Astrocyte of the cerebellum (primary cell): ENCODE measurements at regions of chr16 and their contacts with region 1.

Region 1: GRCh38 chr16:49652456-49653172 is 203.3 kb downstream of the ZNF423 start:
- DNase-seq: no peak
- H3K4me3 ChIP-seq: no peak overlapping the region
- CTCF ChIP-seq: no peak

Region 2: DNA sequence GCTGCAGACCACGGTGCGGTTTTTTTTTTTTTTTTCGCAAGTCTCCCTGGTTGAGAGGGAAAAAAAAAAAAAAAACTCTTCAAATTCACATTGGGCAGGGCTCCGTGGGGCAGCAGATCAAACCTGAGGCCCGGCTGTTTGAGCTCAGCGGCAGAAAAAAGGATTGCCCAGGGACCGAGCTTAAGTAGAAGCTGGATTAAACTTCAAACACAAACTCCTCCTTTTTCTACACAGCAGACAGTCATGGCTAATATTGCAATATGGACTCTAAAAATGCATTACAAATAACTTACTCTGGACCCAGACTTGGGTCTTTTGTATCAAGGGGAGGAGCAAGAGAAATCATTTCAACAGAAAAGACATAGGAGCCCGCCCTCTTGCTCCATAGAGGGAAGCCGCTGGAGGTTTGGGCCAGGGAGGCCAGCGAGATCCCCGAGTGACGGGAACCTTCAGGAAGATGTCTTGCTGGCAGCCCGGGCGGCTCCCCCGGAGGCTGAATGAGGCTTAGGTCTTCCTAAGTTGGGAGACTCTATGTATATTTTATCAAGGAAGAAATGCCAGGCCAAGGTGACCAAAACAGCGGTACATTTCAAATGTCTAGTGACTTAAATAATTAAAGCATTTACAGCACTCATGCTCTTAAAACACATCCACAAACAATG is 35.6 kb after region 1 on chr16:
- in situ Hi-C with region 1: loop called (anchors 5 kb)
- DNase-seq: no peak
- H3K4me3 ChIP-seq: no peak overlapping the region
- CTCF ChIP-seq: no peak

Region 3: GRCh38 chr16:49733313-49734009 is 80.8 kb after region 1 on chr16:
- in situ Hi-C with region 1: no loop called
- DNase-seq: no peak
- H3K4me3 ChIP-seq: no peak overlapping the region
- CTCF ChIP-seq: no peak

Region 4: GRCh38 chr16:49827805-49828438 is 175.3 kb after region 1 on chr16:
- in situ Hi-C with region 1: loop called (anchors 10 kb)
- DNase-seq: peak; percentile 68
- H3K4me3 ChIP-seq: no peak overlapping the region
- CTCF ChIP-seq: no peak